Motor neuron (in vitro differentiated cells): ENCODE measurements at regions of chr6 and their contacts with region 1.

Region 1: DNA sequence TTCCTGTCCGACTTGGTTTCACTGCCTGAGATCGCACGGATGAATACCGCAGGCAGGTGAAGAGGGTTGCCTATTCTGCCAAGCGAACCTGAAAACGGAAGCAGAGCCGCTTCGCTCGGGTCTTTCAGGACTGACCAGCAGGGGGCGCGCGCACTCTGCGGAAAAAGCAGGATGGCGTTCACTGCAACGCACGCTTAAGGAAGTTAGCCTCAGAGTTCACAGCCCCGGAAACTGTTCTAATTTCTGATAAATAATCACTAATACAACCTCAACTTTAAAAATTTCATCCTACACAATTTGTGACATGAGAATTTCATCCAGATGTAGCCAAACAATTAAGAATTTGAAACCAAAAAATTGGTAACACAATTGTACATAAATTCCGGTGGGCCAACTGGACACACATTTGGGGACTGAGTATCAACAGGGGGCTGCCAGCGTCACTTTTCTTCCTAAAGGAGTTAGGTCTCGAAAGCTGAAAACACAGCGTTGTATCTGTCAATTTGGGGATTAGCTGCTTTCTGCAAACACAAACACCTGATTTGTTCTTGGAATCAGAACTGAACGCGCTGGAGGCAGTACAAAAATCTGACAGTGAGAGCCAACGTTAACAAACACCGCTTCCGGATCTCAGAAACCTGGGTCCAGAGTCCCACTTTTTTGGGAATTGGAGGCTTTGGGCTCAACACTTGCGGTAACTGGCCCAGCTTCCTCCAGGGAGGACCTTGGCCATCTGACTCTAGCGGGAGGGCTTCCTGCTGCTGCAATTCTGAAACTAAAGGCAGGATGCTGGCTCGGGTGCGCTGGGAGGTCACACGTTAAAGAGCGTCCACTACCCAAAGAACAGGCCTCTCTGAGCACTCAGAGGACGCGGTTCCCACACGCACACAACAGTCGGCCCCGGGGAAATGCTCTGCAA is 8.8 kb downstream of the PXDC1 start:
- ATAC-seq: peak; percentile 8 to 81 (median 72)
- H3K4me3 ChIP-seq: no peak overlapping the region
- H3K27ac ChIP-seq: peak overlapping the region in 1 of 2 donors; percentile 29
- H3K4me1 ChIP-seq: peaks cover 13 to 18% of the 10 kb centered on the region in 2 donors

Region 2: GRCh38 chr6:3139090-3139903 is 603.4 kb before region 1 on chr6:
- in situ Hi-C with region 1: loop called in 1 of 9 experiments (anchors 25 kb)
- ATAC-seq: peak; percentile 4 to 93 (median 55)
- H3K4me3 ChIP-seq: no peak overlapping the region
- H3K27ac ChIP-seq: no peak overlapping the region
- H3K4me1 ChIP-seq: peaks cover 0 to 11% of the 10 kb centered on the region in 2 donors

Region 3: DNA sequence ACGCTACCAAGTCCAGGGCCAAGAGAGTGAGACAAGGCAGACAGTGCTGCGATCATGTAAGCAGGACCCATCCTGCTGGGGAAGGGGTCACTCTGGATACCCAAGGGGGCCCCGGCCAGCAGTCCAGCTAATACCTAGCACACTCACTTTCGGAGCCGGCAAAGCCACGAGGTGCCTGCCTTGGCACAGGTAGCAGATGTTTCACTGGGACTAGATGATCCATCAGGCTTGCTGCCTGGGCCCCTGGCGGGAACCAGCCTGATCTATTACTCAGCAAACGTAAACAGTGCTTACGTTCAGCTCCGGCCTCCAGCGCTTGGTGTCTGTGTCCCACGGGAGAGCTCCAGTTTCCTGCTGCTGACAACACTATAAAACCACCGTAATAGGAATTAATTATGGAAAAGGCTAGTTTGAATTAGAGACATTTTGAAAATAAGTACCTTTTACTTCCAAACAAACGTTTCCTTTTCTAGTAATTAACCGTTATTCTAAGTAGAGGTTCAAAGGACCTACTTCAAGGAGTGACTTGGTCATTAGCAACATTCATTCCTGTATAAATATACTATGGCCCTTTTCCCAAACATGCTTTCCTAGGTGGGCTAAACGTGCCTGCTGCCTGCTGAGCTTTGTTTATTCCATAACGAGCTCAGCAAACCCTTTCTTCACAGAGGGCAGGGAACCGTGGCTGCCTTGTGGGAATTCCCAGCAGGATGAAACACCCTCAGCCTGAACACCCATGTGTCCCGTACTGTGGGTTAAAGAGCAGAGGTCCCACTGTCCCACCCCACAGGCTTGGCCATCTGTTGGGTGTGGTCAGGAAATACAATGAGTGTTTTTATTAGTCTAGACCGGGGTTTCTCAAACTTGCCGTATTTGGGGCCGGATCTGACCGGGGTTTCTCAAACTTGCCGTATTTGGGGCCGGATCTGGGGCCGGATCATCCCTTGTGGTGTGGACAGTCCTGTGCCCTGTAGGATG is 304.2 kb before region 1 on chr6:
- in situ Hi-C with region 1: loop called in 1 of 9 experiments (anchors 25 kb)
- ATAC-seq: peak in 7 of 8 experiments; percentile 73 to 99 (median 97)
- H3K4me3 ChIP-seq: no peak overlapping the region
- H3K27ac ChIP-seq: peak overlapping the region in 1 of 2 donors; percentile 45
- H3K4me1 ChIP-seq: peaks cover 9 to 12% of the 10 kb centered on the region in 2 donors

Region 4: GRCh38 chr6:3990692-3991501 is 248.2 kb after region 1 on chr6:
- in situ Hi-C with region 1: loop called in 7 of 9 experiments (anchors 10 to 25 kb)
- ATAC-seq: peak; percentile 85 to 99 (median 92)
- H3K4me3 ChIP-seq: no peak overlapping the region
- H3K27ac ChIP-seq: no peak overlapping the region
- H3K4me1 ChIP-seq: no peaks in the 10 kb centered on the region

Region 5: DNA sequence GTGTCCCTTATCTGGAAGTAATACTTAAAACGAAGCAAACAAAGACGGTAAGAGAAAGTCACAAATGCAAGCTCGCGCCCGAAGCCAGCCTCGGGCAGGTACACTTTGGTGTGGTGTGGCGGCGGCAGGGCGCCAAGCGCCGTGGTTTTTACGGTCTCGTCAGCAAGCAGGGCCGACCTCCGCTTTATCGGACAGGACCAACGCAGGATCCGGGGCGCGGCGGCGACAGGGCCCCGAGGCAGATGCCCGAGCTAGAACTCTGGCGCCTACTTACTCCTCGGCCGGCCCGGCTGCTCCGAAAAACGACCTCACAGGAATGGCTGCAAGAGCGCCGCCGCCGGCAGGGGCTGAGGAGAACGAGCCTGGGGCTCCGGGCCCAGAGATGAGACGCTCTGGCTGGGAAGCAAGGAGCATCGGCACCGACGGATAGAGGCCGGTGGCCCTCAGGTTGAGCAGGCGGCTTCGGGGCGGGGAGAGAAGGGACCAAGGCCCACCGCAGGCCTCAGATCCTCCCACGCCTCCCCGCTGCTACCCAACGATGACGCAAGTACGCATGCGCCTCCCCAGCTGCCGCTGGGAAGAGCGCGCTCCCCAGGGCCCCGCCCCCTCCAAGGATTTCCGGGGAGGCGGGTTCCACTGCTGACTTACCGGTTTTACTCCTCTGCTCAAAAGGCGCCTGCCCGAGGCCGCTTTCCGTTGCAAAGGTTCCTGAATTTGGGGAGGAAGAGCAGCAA is 275.7 kb after region 1 on chr6:
- in situ Hi-C with region 1: loop called in 1 of 9 experiments (anchors 25 kb)
- ATAC-seq: peak; percentile 54 to 80 (median 76)
- H3K4me3 ChIP-seq: peak overlapping the region; percentile 62 to 89 (median 71)
- H3K27ac ChIP-seq: peak overlapping the region; percentile 92 to 95
- H3K4me1 ChIP-seq: peaks cover 11 to 28% of the 10 kb centered on the region in 2 donors